Calu3 (cell line): ENCODE measurements at regions of chr2 and their contacts with region 1.

Region 1: GRCh38 chr2:27409321-27410073 is at the start of gene PPM1G:
- DNase-seq: peak; percentile 98
- H3K4me3 Mint-ChIP-seq: peak within 1 kb of the TSS; percentile 97
- H3K27ac Mint-ChIP-seq: peak within 1 kb of the TSS; percentile 83
- H3K4me1 Mint-ChIP-seq: peaks cover 26% of the 10 kb centered on the region
- H3K27me3 Mint-ChIP-seq: no peaks in the 10 kb centered on the region
- CTCF ChIP-seq: no peak
- total RNA-seq, gene PPM1G: 118 and 121 TPM in 2 replicates

Region 2: DNA sequence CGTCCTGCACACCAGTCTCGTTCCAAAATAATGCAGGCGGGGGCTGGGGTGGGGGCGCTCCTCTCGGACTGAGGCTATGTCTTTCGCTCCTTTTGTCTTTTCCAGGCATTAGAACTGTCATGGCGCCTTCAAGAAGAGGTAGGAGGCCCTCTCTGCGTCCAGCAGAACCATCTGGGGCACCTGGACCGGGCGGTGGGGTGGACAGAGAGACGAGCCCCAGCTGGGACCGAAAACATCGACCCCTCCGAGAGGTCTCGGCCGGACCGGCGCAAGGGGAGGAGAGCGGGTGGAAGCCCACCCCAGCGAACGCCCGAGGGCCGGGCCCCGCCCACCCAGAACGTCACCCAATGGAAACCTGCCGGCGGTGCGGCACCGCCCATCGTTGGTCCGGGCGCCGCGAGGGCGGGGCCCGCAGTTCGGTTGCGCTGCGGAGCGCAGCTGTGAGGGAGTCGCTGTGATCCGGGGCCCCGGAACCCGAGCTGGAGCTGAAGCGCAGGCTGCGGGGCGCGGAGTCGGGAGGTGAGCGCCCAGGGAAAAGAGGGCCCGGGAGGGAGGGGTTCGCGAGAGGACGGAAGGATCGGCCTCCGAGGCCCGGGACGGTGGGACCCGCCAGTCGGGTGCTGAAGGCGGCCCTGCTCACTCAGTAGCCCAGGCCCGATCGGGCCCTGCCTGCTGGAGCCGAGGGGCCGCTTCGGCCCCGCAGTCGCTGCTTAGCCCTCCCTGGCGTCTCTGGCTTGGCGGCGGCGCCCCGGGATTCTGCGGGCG is 18.9 kb after region 1 on chr2 and contains the start of gene NRBP1:
- CTCF ChIA-PET with region 1: interaction called, 18 read pairs
- intact Hi-C with region 1: no loop called
- DNase-seq: peak; percentile 97
- H3K4me3 Mint-ChIP-seq: peak within 1 kb of the TSS; percentile 97
- H3K27ac Mint-ChIP-seq: peak within 1 kb of the TSS; percentile 77
- H3K4me1 Mint-ChIP-seq: no peaks in the 10 kb centered on the region
- H3K27me3 Mint-ChIP-seq: no peaks in the 10 kb centered on the region
- CTCF ChIP-seq: no peak
- total RNA-seq, gene NRBP1: 58.2 and 60.5 TPM in 2 replicates

Region 3: GRCh38 chr2:27441958-27442919 is 32.7 kb after region 1 on chr2 and contains the start of gene KRTCAP3:
- CTCF ChIA-PET with region 1: interaction called, 3 read pairs
- intact Hi-C with region 1: loop called (anchors 5 kb)
- DNase-seq: peak; percentile 94
- H3K4me3 Mint-ChIP-seq: peak within 1 kb of the TSS; percentile 79
- H3K27ac Mint-ChIP-seq: peak within 1 kb of the TSS; percentile 85
- H3K4me1 Mint-ChIP-seq: peaks cover 26% of the 10 kb centered on the region
- H3K27me3 Mint-ChIP-seq: no peaks in the 10 kb centered on the region
- CTCF ChIP-seq: peak; percentile 86
- total RNA-seq, gene KRTCAP3: 71.8 and 74.0 TPM in 2 replicates